ENCODE measurements at regions of chr11 and their contacts with region 1.

Region 1: GRCh38 chr11:33065445-33066178 is 26.2 kb downstream of the TCP11L1 start:
- DNase-seq: peak; percentile 48 to 85 (median 76)
- ATAC-seq: peak; percentile 96
- H3K4me3 ChIP-seq: no peak overlapping the region
- H3K4me3 Mint-ChIP-seq: no peak overlapping the region
- H3K27ac ChIP-seq: no peak overlapping the region
- H3K27ac Mint-ChIP-seq: no peak overlapping the region
- H3K4me1 ChIP-seq: peaks cover 25% of the 10 kb centered on the region
- H3K4me1 Mint-ChIP-seq: peaks cover 24% of the 10 kb centered on the region
- H3K27me3 ChIP-seq: no peaks in the 10 kb centered on the region
- H3K27me3 Mint-ChIP-seq: no peaks in the 10 kb centered on the region
- CTCF ChIP-seq: peak; percentile 93

Region 2: GRCh38 chr11:32809313-32809712 is 256.3 kb before region 1 on chr11:
- CTCF ChIA-PET with region 1: interaction called, 3 read pairs
- POLR2A ChIA-PET with region 1: no interaction called
- intact Hi-C with region 1: loop called in 1 of 2 experiments (anchors 5 kb)
- DNase-seq: peak in 7 of 9 experiments; percentile 6 to 51 (median 21)
- ATAC-seq: peak; percentile 51
- H3K4me3 ChIP-seq: no peak overlapping the region
- H3K4me3 Mint-ChIP-seq: no peak overlapping the region
- H3K27ac ChIP-seq: no peak overlapping the region
- H3K27ac Mint-ChIP-seq: no peak overlapping the region
- H3K4me1 ChIP-seq: no peaks in the 10 kb centered on the region
- H3K4me1 Mint-ChIP-seq: no peaks in the 10 kb centered on the region
- H3K27me3 ChIP-seq: no peaks in the 10 kb centered on the region
- H3K27me3 Mint-ChIP-seq: no peaks in the 10 kb centered on the region
- CTCF ChIP-seq: no peak

Region 3: DNA sequence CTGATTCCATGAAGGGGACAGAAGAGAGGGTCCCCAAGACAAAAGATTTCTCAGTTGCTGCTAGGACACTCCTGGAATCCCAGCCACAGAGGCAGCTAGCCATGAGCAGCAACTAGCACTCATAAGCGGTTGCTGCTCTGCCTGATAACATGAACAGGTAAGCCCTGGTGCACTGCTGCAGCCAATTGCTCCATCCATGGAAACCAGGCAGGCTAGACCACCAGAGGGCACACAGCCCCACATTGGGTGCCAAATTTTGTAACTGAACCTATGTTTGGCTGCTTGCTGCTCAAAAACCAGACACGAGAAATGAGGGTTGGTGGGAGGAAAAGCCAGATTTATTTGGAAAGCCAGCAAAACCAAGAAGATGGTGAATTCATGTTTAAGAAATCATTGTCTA is 194.9 kb before region 1 on chr11:
- CTCF ChIA-PET with region 1: interaction called, 5 read pairs
- POLR2A ChIA-PET with region 1: no interaction called
- intact Hi-C with region 1: loop called (anchors 2 to 5 kb)
- DNase-seq: peak in 7 of 9 experiments; percentile 6 to 52 (median 40)
- ATAC-seq: no peak
- H3K4me3 ChIP-seq: no peak overlapping the region
- H3K4me3 Mint-ChIP-seq: no peak overlapping the region
- H3K27ac ChIP-seq: no peak overlapping the region
- H3K27ac Mint-ChIP-seq: no peak overlapping the region
- H3K4me1 ChIP-seq: no peaks in the 10 kb centered on the region
- H3K4me1 Mint-ChIP-seq: no peaks in the 10 kb centered on the region
- H3K27me3 ChIP-seq: no peaks in the 10 kb centered on the region
- H3K27me3 Mint-ChIP-seq: peaks cover 10% of the 10 kb centered on the region
- CTCF ChIP-seq: peak; percentile 23

Region 4: DNA sequence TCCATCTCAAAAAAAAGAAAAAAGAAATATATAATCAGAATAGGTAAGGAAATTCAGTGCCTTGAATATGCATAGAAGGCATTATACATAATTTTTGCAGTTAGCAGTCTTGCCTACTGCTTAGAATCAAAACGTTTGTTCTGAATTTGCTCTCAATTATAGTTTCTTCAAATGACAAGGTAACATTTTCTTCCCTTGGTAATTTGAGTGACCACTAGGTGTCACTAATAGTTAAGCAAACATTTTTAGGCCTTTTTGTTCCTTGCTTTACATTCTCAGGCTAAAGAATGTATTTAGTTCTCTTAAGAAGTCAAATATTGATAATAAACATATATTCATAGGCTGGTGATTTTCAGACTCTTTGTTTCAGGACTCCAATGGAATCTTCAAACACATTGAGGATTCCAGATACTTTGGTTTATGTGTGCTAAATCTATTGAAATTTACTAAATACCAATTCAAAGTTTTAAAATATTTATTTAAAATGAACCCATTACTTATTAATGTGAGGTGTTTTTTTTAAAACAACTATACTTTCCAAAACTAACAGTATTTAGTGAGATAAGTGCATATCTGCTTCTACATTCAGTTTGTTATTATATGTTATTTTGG is 105.0 kb before region 1 on chr11:
- CTCF ChIA-PET with region 1: interaction called, 210 read pairs
- POLR2A ChIA-PET with region 1: interaction called, 5 read pairs
- intact Hi-C with region 1: loop called (anchors 1 kb)
- DNase-seq: peak in 2 of 9 experiments; percentile 62 to 69
- ATAC-seq: peak; percentile 46
- H3K4me3 ChIP-seq: no peak overlapping the region
- H3K4me3 Mint-ChIP-seq: no peak overlapping the region
- H3K27ac ChIP-seq: no peak overlapping the region
- H3K27ac Mint-ChIP-seq: no peak overlapping the region
- H3K4me1 ChIP-seq: no peaks in the 10 kb centered on the region
- H3K4me1 Mint-ChIP-seq: no peaks in the 10 kb centered on the region
- H3K27me3 ChIP-seq: no peaks in the 10 kb centered on the region
- H3K27me3 Mint-ChIP-seq: no peaks in the 10 kb centered on the region
- CTCF ChIP-seq: peak; percentile 78

Region 5: DNA sequence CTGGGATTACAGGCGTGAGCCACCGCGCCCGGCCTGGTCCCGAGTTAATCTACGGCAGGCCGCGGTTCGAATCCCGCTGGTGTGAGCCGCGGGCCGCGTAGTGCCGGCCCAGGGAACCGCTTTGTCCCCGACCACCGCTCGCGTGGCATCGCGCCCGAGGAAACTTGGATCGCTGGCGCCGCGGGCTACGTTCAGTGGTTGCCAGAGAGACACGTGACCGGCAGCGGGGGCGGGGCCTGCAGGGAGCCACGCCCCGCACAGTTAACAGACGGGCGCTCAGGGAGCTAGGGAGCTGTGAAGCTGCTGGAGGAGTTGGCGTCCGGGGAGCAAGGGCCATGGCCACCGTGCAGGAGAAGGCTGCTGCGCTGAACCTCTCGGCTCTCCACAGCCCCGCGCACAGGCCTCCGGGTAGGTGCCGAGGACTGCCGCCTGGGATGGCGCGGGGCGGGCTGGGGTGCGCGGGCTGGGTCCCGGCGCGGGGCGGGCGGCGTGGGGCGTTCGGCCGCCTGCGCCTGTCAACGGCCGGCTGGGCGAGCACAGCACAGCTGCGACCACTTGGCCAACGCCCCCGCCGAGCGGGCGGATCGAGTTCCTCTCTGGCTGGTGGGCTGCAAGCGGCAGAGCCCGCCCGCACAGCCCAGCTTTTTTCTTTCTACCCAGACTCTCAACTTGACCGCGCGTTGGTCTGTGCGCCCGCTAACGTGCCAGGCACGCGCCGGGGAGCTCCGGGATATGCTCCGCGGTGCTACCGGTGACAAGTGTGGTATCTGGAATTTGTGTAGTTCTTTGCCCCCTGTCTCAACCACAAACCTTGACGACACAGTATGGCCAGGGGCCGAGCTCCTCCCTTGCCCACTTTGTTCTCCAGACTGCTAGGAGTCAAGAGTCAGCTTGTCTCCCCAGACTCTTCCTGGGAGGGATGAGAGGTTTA is 49.7 kb before region 1 on chr11 and contains the start of gene DEPDC7:
- CTCF ChIA-PET with region 1: interaction called, 10 read pairs
- POLR2A ChIA-PET with region 1: no interaction called
- intact Hi-C with region 1: loop called in 1 of 2 experiments (anchors 2 kb)
- DNase-seq: peak; percentile 49 to 87 (median 80)
- ATAC-seq: peak; percentile 75
- H3K4me3 ChIP-seq: peak within 1 kb of the TSS; percentile 56 to 62
- H3K4me3 Mint-ChIP-seq: peak within 1 kb of the TSS; percentile 89
- H3K27ac ChIP-seq: no peak within 1 kb of the TSS
- H3K27ac Mint-ChIP-seq: peak within 1 kb of the TSS; percentile 73
- H3K4me1 ChIP-seq: peaks cover 26% of the 10 kb centered on the region
- H3K4me1 Mint-ChIP-seq: peaks cover 51% of the 10 kb centered on the region
- H3K27me3 ChIP-seq: peaks cover 0 to 2% of the 10 kb centered on the region in 2 experiments
- H3K27me3 Mint-ChIP-seq: peaks cover 12% of the 10 kb centered on the region
- CTCF ChIP-seq: no peak
- total RNA-seq, gene DEPDC7: 2.9 to 3.2 TPM

Region 6: DNA sequence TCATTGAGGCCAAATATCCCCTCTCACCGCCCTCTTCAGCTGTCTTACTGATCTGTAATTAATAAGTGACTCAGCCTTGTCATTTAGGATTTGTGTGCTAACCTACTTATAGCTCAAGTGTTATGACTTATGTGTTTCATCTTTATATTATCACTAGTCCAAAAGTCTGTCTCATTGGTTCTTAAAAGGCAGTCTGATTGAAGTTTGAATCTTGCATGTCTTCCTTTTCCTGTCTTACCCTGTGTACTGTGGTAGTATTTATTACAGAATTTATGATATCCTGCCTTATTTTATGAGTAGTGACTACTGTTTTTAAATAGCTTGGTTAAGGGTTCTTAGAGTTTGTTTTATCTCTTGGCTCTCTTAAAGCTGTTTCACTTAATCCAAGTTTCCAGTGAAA is 43.7 kb before region 1 on chr11:
- CTCF ChIA-PET with region 1: interaction called, 10 read pairs
- POLR2A ChIA-PET with region 1: no interaction called
- intact Hi-C with region 1: no loop called
- DNase-seq: no peak
- ATAC-seq: peak; percentile 38
- H3K4me3 ChIP-seq: no peak overlapping the region
- H3K4me3 Mint-ChIP-seq: no peak overlapping the region
- H3K27ac ChIP-seq: no peak overlapping the region
- H3K27ac Mint-ChIP-seq: no peak overlapping the region
- H3K4me1 ChIP-seq: peaks cover 13% of the 10 kb centered on the region
- H3K4me1 Mint-ChIP-seq: peaks cover 27% of the 10 kb centered on the region
- H3K27me3 ChIP-seq: peaks cover 0 to 2% of the 10 kb centered on the region in 2 experiments
- H3K27me3 Mint-ChIP-seq: peaks cover 7% of the 10 kb centered on the region
- CTCF ChIP-seq: no peak

Region 7: DNA sequence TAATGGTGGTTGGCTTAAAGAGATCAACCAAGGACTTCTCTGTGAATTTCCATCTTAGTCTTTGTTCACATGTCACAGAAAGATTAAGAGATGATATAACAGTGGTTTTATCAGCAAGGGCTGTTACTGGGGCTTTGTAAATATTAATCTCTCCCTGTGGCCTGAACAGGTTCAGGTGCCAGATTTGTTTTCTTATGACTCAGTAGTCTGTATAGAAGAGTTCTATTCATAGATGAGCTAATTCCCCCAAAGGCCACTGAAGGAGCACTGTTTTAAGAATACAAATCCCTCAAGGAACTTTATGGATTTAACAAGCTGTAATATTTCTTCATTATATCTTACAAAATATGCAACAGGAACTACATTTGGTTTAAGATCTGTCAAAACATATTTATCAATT is 24.2 kb after region 1 on chr11:
- CTCF ChIA-PET with region 1: interaction called, 10 read pairs
- POLR2A ChIA-PET with region 1: no interaction called
- intact Hi-C with region 1: no loop called
- DNase-seq: no peak
- ATAC-seq: no peak
- H3K4me3 ChIP-seq: no peak overlapping the region
- H3K4me3 Mint-ChIP-seq: no peak overlapping the region
- H3K27ac ChIP-seq: no peak overlapping the region
- H3K27ac Mint-ChIP-seq: peak overlapping the region; percentile 14
- H3K4me1 ChIP-seq: no peaks in the 10 kb centered on the region
- H3K4me1 Mint-ChIP-seq: no peaks in the 10 kb centered on the region
- H3K27me3 ChIP-seq: no peaks in the 10 kb centered on the region
- H3K27me3 Mint-ChIP-seq: no peaks in the 10 kb centered on the region
- CTCF ChIP-seq: no peak

Region 8: DNA sequence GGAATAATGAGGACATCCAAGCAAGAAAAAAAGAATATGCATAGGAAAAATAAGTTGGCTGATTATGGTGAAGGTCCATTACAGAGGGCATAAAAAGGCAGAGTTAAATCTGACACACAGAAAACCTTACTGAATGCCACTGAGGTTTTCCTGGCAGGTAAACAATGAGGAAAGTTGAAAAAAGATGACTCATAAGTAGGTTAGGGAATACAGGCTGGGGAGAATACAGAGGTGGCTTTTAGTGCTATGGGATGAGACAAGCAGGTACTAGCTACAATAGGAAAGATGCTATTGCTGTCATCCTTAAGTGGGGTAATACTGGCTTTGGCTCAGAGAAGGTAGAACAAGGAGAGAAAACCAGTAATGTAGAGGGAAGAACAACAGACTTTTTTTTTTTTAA is 50.9 kb after region 1 on chr11:
- CTCF ChIA-PET with region 1: no interaction called
- POLR2A ChIA-PET with region 1: no interaction called
- intact Hi-C with region 1: no loop called
- DNase-seq: no peak
- ATAC-seq: no peak
- H3K4me3 ChIP-seq: no peak overlapping the region
- H3K4me3 Mint-ChIP-seq: no peak overlapping the region
- H3K27ac ChIP-seq: no peak overlapping the region
- H3K27ac Mint-ChIP-seq: no peak overlapping the region
- H3K4me1 ChIP-seq: no peaks in the 10 kb centered on the region
- H3K4me1 Mint-ChIP-seq: no peaks in the 10 kb centered on the region
- H3K27me3 ChIP-seq: no peaks in the 10 kb centered on the region
- H3K27me3 Mint-ChIP-seq: no peaks in the 10 kb centered on the region
- CTCF ChIP-seq: no peak

Region 9: GRCh38 chr11:33128739-33129138 is 63.1 kb after region 1 on chr11:
- CTCF ChIA-PET with region 1: no interaction called
- POLR2A ChIA-PET with region 1: no interaction called
- intact Hi-C with region 1: no loop called
- DNase-seq: no peak
- ATAC-seq: no peak
- H3K4me3 ChIP-seq: no peak overlapping the region
- H3K4me3 Mint-ChIP-seq: no peak overlapping the region
- H3K27ac ChIP-seq: no peak overlapping the region
- H3K27ac Mint-ChIP-seq: no peak overlapping the region
- H3K4me1 ChIP-seq: no peaks in the 10 kb centered on the region
- H3K4me1 Mint-ChIP-seq: peaks cover 4% of the 10 kb centered on the region
- H3K27me3 ChIP-seq: no peaks in the 10 kb centered on the region
- H3K27me3 Mint-ChIP-seq: no peaks in the 10 kb centered on the region
- CTCF ChIP-seq: no peak

Region 10: DNA sequence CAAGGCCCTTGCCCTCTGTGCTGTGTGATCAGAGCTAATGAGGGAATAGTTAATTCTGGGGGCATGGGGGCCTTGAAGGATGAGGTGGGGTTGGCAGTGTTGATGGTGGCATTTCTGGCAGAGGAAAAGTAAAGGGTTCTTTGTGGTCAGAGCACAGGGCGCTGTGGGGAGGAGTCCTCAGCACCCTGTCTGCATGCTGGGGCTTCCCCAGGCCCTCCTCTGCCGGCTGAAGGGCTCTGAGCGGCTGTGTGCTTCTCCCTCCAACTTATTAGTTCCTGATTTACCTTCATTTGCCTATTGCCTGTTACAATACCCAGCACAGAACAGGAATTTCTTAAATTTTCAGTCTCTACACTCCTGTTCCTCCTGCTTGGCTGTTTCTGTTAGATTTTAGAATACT is 314.3 kb after region 1 on chr11:
- CTCF ChIA-PET with region 1: no interaction called
- POLR2A ChIA-PET with region 1: no interaction called
- intact Hi-C with region 1: no loop called
- DNase-seq: peak in 1 of 9 experiments; percentile 18
- ATAC-seq: no peak
- H3K4me3 ChIP-seq: no peak overlapping the region
- H3K4me3 Mint-ChIP-seq: no peak overlapping the region
- H3K27ac ChIP-seq: no peak overlapping the region
- H3K27ac Mint-ChIP-seq: no peak overlapping the region
- H3K4me1 ChIP-seq: no peaks in the 10 kb centered on the region
- H3K4me1 Mint-ChIP-seq: peaks cover 4% of the 10 kb centered on the region
- H3K27me3 ChIP-seq: no peaks in the 10 kb centered on the region
- H3K27me3 Mint-ChIP-seq: peaks cover 36% of the 10 kb centered on the region
- CTCF ChIP-seq: no peak